Cardiac septum (tissue), 1 donor: ENCODE measurements at regions of chr7 and their contacts with region 1.

Region 1: GRCh38 chr7:150448789-150449147 is 1.7 kb upstream of the GIMAP8 start:
- DNase-seq: peak; percentile 94

Region 2: DNA sequence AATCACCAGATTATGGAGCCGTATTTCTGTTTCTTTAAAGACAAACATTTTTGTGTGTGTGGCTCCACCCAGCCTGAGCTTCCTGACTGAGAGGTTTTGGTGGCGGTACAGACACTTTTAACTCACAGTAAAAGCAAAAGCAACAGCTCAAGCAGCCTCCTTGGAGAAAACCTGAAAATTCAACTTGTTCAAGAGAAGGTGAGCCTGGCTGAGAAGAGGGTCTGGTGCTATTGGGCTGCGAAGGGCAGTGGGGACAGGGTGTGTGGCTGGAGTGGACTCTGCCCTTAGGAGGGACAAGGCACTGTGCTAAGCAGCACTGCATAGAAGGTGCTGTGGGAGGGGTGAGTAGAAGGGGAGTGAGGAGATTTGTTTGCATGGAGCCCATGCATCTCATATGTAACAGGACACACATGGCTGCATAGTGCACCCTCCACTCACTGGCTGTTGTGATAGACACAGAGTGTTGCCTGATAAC is 66.0 kb after region 1 on chr7 and contains the start of gene GIMAP7:
- intact Hi-C with region 1: loop called (anchors 5 kb)
- DNase-seq: no peak
- total RNA-seq, gene GIMAP7: 13.0 TPM

Region 3: GRCh38 chr7:150586785-150587152 is 138.0 kb after region 1 on chr7:
- intact Hi-C with region 1: loop called (anchors 5 kb)
- DNase-seq: no peak

Region 4: GRCh38 chr7:150737265-150738055 is 288.7 kb after region 1 on chr7 and contains the start of gene GIMAP5:
- intact Hi-C with region 1: loop called (anchors 5 kb)
- DNase-seq: no peak
- total RNA-seq, gene GIMAP5: 6.6 TPM

Region 5: DNA sequence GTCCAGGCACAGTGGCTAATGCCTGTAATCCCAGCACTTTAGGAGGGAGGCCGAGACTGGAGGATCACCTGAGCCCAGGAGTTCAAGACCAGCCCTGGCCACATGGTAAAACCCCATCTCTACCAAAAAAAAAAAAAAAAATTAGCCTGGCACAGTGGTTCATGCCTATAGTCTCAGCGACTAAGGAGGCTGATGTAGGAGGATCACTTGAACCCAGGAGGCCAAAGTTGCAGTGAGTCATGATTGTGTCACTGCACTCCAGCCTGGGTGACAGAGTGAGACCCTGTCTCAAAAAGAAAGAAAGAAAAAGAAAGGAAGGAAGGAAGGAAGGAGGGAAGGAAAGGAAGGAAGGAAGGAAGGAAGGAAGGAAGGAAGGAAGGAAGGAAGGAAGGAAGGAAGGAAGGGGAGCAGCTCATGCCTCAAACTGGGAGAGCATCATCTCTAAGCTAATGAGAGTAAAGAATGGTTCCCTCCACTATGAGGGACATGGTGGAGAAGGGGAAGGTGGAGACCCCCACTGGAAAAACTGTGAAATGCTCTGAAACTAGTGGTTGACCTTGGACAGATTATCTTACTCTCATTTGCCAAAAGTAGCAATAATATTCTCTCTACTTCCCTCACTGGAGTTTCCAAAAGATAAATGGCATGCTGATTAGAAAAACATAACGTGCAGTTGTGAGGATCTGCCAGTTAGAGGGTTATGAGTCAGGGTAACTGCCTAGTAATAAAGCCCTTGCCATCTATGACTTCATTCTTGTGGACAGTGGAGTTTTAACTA is 305.2 kb after region 1 on chr7:
- intact Hi-C with region 1: loop called (anchors 1 kb)
- DNase-seq: no peak